Right cardiac atrium (tissue), 5 donors: ENCODE measurements at regions of chr2 and their contacts with region 1.

Region 1: DNA sequence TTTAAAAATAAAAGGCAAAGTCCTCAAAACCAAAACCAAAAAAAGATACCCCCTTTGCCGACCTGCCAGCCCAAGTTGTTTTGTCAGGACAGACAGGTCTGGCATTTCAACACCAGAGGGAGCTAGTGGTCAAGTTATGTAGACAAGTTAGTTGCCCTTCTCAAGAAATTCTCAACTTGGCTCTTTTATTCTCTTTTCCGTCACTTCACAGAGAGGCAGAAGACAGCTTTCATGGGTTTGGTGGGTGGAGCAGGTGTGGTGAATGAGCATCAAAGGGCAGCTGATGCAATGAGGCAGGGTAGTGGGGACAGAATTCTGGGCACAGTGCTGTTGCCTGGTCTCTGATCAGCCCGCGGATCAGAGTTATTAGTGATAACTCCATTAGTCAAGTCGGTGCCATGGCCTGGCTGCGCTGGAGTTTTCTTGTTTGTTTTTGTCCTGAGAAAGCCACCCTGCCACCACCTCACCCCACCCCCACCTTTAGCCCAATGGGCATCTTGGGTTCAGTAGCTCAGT is 303.7 kb upstream of the EPAS1 start:
- DNase-seq: peak; percentile 55 to 66 (median 64)
- ATAC-seq: peak; percentile 65 to 72
- H3K4me3 ChIP-seq: no peak overlapping the region
- H3K27ac ChIP-seq: no peak overlapping the region
- H3K4me1 ChIP-seq: peaks cover 6% of the 10 kb centered on the region
- H3K27me3 ChIP-seq: no peaks in the 10 kb centered on the region

Region 2: GRCh38 chr2:46385786-46386577 is 392.4 kb after region 1 on chr2:
- intact Hi-C with region 1: loop called in 1 of 4 experiments (anchors 10 kb)
- DNase-seq: no peak
- ATAC-seq: peak in 1 of 2 donors; percentile 3
- H3K4me3 ChIP-seq: no peak overlapping the region
- H3K27ac ChIP-seq: no peak overlapping the region
- H3K4me1 ChIP-seq: peaks cover 2% of the 10 kb centered on the region
- H3K27me3 ChIP-seq: no peaks in the 10 kb centered on the region

Region 3: GRCh38 chr2:46461011-46461674 is 467.6 kb after region 1 on chr2:
- intact Hi-C with region 1: loop called in 2 of 4 experiments (anchors 2 kb)
- DNase-seq: peak; percentile 75 to 92 (median 89)
- ATAC-seq: peak; percentile 59 to 64
- H3K4me3 ChIP-seq: no peak overlapping the region
- H3K27ac ChIP-seq: peak overlapping the region; percentile 76
- H3K4me1 ChIP-seq: peaks cover 16% of the 10 kb centered on the region
- H3K27me3 ChIP-seq: no peaks in the 10 kb centered on the region